ENCODE measurements at regions of chr4 and their contacts with region 1.

Region 1: GRCh38 chr4:1171306-1172227 is 816 bp downstream of the SPON2 start:
- DNase-seq: no peak
- H3K4me3 ChIP-seq: peak overlapping the region; percentile 62
- H3K27ac ChIP-seq: peak overlapping the region; percentile 61
- H3K27me3 ChIP-seq: peaks cover 5% of the 10 kb centered on the region
- CTCF ChIP-seq: no peak

Region 2: DNA sequence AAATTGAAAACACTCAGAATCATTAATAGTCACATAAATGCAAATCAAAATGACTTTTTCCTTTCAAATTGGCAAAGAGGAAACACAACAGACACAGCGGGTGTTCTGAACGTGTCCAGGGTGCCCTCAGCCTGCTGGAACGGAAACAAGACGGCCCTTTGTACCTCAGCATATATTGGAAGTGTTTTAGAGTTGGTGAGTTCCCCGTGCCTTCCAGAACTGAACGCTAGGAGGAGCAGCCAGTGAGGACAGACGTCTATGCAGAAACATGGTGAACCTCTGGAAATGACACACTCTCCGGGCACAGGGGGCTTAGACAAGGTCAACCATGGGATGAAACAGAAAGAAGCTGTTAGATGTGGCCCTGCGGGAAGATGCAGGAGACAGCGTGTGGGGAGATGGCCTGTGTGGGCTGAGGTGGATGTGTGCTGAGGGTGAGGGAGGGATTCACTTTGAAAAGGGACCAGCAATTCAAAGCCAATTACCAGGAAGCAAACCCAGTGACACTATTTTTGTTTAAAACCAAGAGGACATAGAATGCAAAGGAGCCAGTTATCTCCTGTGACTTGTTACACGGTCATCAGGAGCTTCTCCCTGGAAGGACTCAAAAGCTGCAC is 98.6 kb before region 1 on chr4:
- CTCF ChIA-PET with region 1: no interaction called
- POLR2A ChIA-PET with region 1: no interaction called
- DNase-seq: no peak
- H3K4me3 ChIP-seq: no peak overlapping the region
- H3K27ac ChIP-seq: no peak overlapping the region
- H3K27me3 ChIP-seq: peaks cover 38% of the 10 kb centered on the region
- CTCF ChIP-seq: peak; percentile 87

Region 3: DNA sequence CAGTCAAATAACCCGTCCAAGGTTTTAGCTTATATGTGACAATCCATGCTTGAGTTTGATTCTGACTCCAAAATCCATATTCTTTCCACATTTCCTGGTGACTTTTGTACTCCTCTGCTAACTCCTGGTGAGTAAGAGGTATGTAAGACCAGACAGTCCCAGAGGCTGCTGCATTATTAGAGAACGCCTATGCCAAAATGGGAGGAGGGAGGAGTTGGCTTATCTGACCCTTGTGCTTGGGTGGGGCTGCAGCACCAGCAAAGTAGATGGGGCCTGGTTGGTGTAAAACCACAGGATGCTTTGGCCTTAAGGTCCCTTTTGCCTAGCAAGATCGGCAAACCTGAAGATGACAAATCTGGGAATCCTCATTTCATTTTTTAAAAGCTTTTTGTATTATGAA is 49.1 kb before region 1 on chr4:
- CTCF ChIA-PET with region 1: no interaction called
- POLR2A ChIA-PET with region 1: no interaction called
- DNase-seq: no peak
- H3K4me3 ChIP-seq: no peak overlapping the region
- H3K27ac ChIP-seq: no peak overlapping the region
- H3K27me3 ChIP-seq: peaks cover 10% of the 10 kb centered on the region
- CTCF ChIP-seq: no peak

Region 4: GRCh38 chr4:1183985-1184773 is 12.6 kb after region 1 on chr4:
- CTCF ChIA-PET with region 1: interaction called, 4 read pairs
- POLR2A ChIA-PET with region 1: interaction called, 13 read pairs
- DNase-seq: no peak
- H3K4me3 ChIP-seq: no peak overlapping the region
- H3K27ac ChIP-seq: no peak overlapping the region
- H3K27me3 ChIP-seq: no peaks in the 10 kb centered on the region
- CTCF ChIP-seq: no peak

Region 5: GRCh38 chr4:1192091-1192492 is 20.5 kb after region 1 on chr4:
- CTCF ChIA-PET with region 1: no interaction called
- POLR2A ChIA-PET with region 1: interaction called, 14 read pairs
- DNase-seq: peak; percentile 95
- H3K4me3 ChIP-seq: no peak overlapping the region
- H3K27ac ChIP-seq: peak overlapping the region; percentile 99
- H3K27me3 ChIP-seq: no peaks in the 10 kb centered on the region
- CTCF ChIP-seq: no peak

Region 6: DNA sequence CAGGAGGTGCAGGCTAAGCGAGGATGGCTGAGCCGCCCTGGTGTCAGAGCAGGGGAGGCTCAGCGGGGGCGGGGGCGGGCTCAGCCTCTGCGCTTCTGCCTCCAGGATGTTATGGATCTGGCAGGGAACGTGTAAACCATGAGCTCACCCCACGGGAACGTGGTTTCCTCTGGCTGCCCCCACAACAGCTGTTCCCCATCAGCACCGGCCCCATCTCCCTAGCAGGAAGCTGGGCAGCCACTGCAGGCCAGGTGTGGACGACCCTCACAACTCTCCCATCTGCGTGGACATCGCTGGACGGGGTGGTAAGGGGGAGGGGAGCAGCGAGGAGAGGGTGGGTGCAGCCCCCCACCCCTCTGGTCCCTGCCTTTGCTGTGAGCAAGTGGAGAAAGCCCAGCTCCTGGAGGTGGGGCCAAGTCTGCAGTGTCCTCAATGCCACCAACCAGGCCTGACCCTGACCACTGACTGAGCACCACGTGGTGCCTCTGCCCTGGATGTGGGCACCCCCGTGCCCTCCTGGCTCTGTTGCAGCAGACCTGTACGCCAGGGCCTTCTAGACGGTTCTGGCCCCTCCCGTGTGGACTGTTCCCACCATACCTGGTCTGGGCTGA is 29.0 kb after region 1 on chr4:
- CTCF ChIA-PET with region 1: interaction called, 4 read pairs
- POLR2A ChIA-PET with region 1: interaction called, 32 read pairs
- DNase-seq: peak; percentile 87
- H3K4me3 ChIP-seq: peak overlapping the region; percentile 41
- H3K27ac ChIP-seq: peak overlapping the region; percentile 98
- H3K27me3 ChIP-seq: no peaks in the 10 kb centered on the region
- CTCF ChIP-seq: no peak

Region 7: DNA sequence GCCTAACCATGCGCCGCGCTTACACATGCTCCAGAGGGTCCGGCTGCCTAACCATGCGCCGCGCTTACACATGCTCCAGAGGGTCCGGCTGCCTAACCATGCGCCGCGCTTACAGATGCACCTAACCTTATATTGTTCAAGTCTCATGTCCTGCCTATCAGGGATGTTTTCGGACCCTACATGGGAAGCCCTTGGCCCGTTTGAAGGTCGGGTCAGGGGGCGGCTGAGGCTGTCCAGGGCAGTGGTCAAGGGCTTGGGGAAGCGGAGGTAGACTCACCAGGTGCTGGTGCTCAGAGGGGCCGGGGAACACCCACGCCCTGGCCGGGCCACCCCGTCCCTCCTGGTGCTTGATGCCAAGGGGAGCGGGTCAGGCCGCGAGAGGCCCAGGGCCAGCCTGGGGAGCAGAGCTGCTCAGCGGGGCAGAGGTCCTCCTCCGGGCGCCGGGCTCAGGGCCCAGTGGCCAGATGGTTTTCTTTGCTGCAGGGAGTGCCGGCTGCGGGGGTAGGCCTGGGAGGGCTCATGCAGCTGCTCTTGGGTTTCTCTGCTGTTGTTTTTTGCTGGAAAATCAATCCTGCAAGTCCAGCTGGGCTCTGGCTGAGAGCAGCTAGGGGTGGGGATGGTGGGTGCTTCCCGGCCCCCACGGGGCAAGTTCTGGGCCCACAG is 36.2 kb after region 1 on chr4:
- CTCF ChIA-PET with region 1: interaction called, 4 read pairs
- POLR2A ChIA-PET with region 1: interaction called, 32 read pairs
- DNase-seq: peak; percentile 77
- H3K4me3 ChIP-seq: no peak overlapping the region
- H3K27ac ChIP-seq: peak overlapping the region; percentile 80
- H3K27me3 ChIP-seq: no peaks in the 10 kb centered on the region
- CTCF ChIP-seq: no peak

Region 8: DNA sequence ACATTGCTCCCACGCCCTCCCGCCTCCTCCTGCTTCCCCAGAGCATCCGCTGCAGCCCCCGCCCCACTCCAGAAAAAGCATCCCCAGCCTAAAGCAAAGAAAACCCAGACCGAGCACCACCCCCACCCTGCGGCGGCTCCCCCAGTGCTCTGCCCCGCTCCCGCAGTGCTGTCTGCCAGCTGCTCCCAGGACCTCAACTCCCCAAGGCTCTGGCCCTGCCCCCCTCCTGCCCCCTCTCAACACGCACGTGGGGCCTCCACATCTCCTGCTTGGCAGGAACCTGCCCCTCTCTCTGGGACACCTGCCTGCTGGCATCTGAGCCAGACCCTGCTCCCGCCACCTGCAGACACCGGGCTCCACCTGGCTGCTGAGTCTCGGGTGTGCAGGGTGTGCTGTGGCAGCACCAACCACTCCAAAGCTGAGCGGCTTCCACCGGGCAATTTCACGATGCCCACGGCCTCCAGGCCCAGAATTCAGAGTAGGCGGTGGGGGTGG is 433.2 kb after region 1 on chr4:
- CTCF ChIA-PET with region 1: no interaction called
- POLR2A ChIA-PET with region 1: no interaction called
- DNase-seq: no peak
- H3K4me3 ChIP-seq: no peak overlapping the region
- H3K27ac ChIP-seq: no peak overlapping the region
- H3K27me3 ChIP-seq: peaks cover 22% of the 10 kb centered on the region
- CTCF ChIP-seq: no peak